Endothelial cell of umbilical vein (primary cell): ENCODE measurements at regions of chr4 and their contacts with region 1.

Region 1: DNA sequence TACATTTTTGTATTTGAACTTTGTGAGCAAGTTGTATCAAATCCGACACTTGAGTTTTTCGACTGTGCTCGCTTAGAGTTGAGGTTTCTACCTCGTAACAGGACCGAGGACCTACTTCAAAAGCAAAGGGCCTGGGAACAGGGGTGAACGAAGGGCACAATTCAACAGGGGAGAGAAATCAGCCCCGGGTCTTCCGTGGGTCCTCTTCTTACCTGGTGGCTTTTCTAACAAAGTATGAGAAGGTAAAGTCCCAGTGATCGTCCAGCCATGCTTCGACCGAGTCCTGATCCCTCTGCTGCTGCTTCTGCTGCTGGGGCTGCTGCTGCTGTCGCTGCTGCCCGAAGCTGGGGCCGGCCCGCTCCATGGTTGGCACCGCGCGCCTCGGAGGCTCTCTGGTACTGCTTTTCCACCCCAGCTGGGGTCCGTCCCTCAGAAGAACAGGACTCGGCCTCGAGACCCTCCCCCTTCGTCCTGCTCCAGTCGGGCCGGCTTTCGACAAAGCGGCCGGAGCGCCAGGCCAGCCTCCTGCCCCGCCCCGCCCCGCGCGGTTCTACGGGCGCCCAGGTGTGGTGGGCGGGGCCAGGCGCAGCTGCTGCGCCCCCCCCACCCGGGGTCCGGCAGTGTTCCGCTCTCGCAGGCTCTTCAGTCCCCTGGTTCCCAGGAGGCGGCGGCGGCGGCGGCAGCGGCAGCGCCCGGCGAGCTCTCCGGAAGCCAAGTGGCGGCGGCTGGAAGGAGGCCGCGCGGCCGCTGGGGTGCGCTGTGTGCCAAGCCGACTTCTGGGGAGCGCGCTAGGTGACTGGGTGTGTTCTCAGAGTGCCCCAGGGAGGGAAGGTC is at the start of gene PDE5A:
- DNase-seq: peak; percentile 78
- H3K4me3 ChIP-seq: peak within 1 kb of the TSS; percentile 74 to 78 (median 78)
- H3K27ac ChIP-seq: no peak within 1 kb of the TSS
- H3K4me1 ChIP-seq: peaks cover 14% of the 10 kb centered on the region
- H3K27me3 ChIP-seq: peaks cover 0 to under 1% of the 10 kb centered on the region in 2 experiments
- CTCF ChIP-seq: peak; percentile 71 to 79
- POLR2A ChIP-seq: no peak
- total RNA-seq, gene PDE5A: 2.3 and 3.2 TPM in 2 replicates

Region 2: DNA sequence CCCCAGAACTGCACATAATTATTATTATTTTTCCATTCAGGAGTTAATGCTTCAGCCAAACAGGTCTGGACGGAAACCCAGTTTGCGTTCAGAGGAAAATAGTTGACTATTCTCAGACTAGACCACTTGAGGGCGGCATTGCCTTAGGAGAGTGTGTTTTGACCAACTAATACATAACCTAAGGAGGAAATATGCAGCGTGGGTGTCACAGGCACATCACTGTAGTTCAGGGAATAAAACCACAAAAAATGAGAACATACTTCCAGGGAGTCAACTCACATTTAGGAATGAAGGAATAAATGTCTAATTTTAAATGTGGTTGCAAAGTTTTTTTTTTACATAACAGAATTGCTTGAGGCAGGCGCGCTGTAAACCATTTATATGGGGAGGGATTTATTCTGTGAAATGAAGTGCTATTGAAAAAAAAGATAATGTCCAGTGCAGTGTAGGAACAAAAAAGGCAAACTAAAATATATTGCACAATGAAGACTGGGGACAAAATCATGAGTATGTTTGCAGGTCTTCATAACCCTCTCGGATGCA is 646.6 kb before region 1 on chr4:
- CTCF ChIA-PET with region 1: interaction called, 62 read pairs
- POLR2A ChIA-PET with region 1: no interaction called
- dilution Hi-C with region 1: no loop called
- intact Hi-C with region 1: loop called (anchors 1 kb)
- DNase-seq: peak; percentile 64
- H3K4me3 ChIP-seq: no peak overlapping the region
- H3K27ac ChIP-seq: no peak overlapping the region
- H3K4me1 ChIP-seq: peaks cover 7% of the 10 kb centered on the region
- H3K27me3 ChIP-seq: no peaks in the 10 kb centered on the region
- CTCF ChIP-seq: peak; percentile 56 to 57
- POLR2A ChIP-seq: no peak

Region 3: GRCh38 chr4:119321921-119322687 is 306.4 kb before region 1 on chr4 and contains the start of gene FABP2:
- CTCF ChIA-PET with region 1: interaction called, 15 read pairs
- POLR2A ChIA-PET with region 1: no interaction called
- dilution Hi-C with region 1: no loop called
- intact Hi-C with region 1: no loop called
- DNase-seq: no peak
- H3K4me3 ChIP-seq: no peak within 1 kb of the TSS
- H3K27ac ChIP-seq: no peak within 1 kb of the TSS
- H3K4me1 ChIP-seq: no peaks in the 10 kb centered on the region
- H3K27me3 ChIP-seq: peaks cover 0 to 11% of the 10 kb centered on the region in 2 experiments
- CTCF ChIP-seq: no peak
- POLR2A ChIP-seq: no peak
- total RNA-seq, gene FABP2: not detected in 2 replicates

Region 4: GRCh38 chr4:119559044-119559647 is 69.4 kb before region 1 on chr4:
- CTCF ChIA-PET with region 1: interaction called, 83 read pairs
- POLR2A ChIA-PET with region 1: no interaction called
- dilution Hi-C with region 1: no loop called
- intact Hi-C with region 1: loop called (anchors 1 kb)
- DNase-seq: peak; percentile 61
- H3K4me3 ChIP-seq: no peak overlapping the region
- H3K27ac ChIP-seq: no peak overlapping the region
- H3K4me1 ChIP-seq: no peaks in the 10 kb centered on the region
- H3K27me3 ChIP-seq: no peaks in the 10 kb centered on the region
- CTCF ChIP-seq: peak; percentile 10 to 17
- POLR2A ChIP-seq: no peak

Region 5: DNA sequence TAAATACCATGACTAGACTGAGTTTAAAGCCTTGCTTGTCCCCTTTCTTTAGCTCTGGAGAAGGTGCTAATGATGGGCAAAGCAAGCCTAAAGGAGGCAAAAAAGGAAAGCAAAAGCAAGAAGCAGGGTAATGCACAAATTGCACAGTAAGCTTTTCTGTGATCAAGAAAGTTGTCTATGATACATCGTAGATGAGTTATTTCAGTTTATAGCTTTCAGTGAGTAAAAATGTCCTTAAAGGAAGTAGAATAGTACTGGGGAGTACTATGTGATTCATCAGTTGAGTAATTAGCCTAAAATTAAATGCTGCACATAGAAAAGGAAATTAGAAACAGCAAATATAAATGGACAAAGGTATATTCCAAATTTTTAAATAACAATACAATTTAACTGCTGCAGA is 50.2 kb after region 1 on chr4:
- CTCF ChIA-PET with region 1: interaction called, 10 read pairs
- POLR2A ChIA-PET with region 1: no interaction called
- dilution Hi-C with region 1: no loop called
- intact Hi-C with region 1: no loop called
- DNase-seq: no peak
- H3K4me3 ChIP-seq: no peak overlapping the region
- H3K27ac ChIP-seq: no peak overlapping the region
- H3K4me1 ChIP-seq: no peaks in the 10 kb centered on the region
- H3K27me3 ChIP-seq: no peaks in the 10 kb centered on the region
- CTCF ChIP-seq: no peak
- POLR2A ChIP-seq: no peak

Region 6: GRCh38 chr4:119721878-119722277 is 93.4 kb after region 1 on chr4:
- CTCF ChIA-PET with region 1: no interaction called
- POLR2A ChIA-PET with region 1: no interaction called
- dilution Hi-C with region 1: no loop called
- intact Hi-C with region 1: no loop called
- DNase-seq: no peak
- H3K4me3 ChIP-seq: no peak overlapping the region
- H3K27ac ChIP-seq: no peak overlapping the region
- H3K4me1 ChIP-seq: no peaks in the 10 kb centered on the region
- H3K27me3 ChIP-seq: no peaks in the 10 kb centered on the region
- CTCF ChIP-seq: no peak
- POLR2A ChIP-seq: no peak

Region 7: GRCh38 chr4:120049732-120050494 is 421.4 kb after region 1 on chr4:
- CTCF ChIA-PET with region 1: interaction called, 149 read pairs
- POLR2A ChIA-PET with region 1: no interaction called
- dilution Hi-C with region 1: no loop called
- intact Hi-C with region 1: loop called (anchors 1 kb)
- DNase-seq: peak; percentile 76
- H3K4me3 ChIP-seq: no peak overlapping the region
- H3K27ac ChIP-seq: no peak overlapping the region
- H3K4me1 ChIP-seq: peaks cover 3% of the 10 kb centered on the region
- H3K27me3 ChIP-seq: no peaks in the 10 kb centered on the region
- CTCF ChIP-seq: peak; percentile 77 to 79
- POLR2A ChIP-seq: no peak